Left ventricle myocardium superior (tissue), 1 donor: ENCODE measurements at regions of chr20 and their contacts with region 1.

Region 1: DNA sequence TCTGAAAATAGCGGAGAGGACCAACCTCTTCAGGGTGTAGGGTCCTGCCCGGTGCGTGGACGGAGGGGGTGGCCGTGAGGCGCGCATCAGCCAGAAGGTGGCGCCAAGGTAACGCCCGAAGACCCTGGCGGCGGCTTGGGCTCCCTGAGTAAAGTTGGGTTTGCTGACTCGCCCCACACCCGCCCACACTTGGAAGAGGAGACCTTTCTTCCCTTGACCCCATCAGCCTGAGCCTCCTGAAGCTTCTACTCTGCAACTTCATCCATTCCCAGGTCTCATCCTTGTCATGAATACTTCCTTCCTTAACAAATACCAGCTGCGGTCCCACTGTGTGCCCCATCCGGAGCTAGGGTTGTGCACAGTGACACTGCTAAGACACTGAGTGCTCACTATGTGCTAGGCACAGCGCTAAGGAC is 14.6 kb downstream of the CD40 start:
- DNase-seq: peak; percentile 85
- ATAC-seq: peak; percentile 89

Region 2: GRCh38 chr20:46215913-46216707 is 83.4 kb after region 1 on chr20:
- intact Hi-C with region 1: no loop called
- DNase-seq: peak; percentile 54
- ATAC-seq: peak; percentile 84

Region 3: GRCh38 chr20:46349035-46349741 is 216.5 kb after region 1 on chr20:
- intact Hi-C with region 1: loop called (anchors 10 kb)
- DNase-seq: peak; percentile 81
- ATAC-seq: peak; percentile 80